SK-N-SH (cell line): ENCODE measurements at regions of chr17 and their contacts with region 1.

Region 1: GRCh38 chr17:48878918-48879898 is 13.4 kb upstream of the ATP5MC1 start:
- DNase-seq: peak; percentile 87
- H3K4me3 ChIP-seq: no peak overlapping the region
- H3K27ac ChIP-seq: no peak overlapping the region
- H3K4me1 ChIP-seq: no peaks in the 10 kb centered on the region
- H3K27me3 ChIP-seq: peaks cover 26% of the 10 kb centered on the region; the same call in 1 of the 2 replicates
- CTCF ChIP-seq: peak; percentile 100
- EP300 ChIP-seq: no peak
- RAD21 ChIP-seq: peak; percentile 100

Region 2: GRCh38 chr17:48148854-48149786 is 730.1 kb before region 1 on chr17:
- CTCF ChIA-PET with region 1: no interaction called
- POLR2A ChIA-PET with region 1: no interaction called
- DNase-seq: peak; percentile 50
- H3K4me3 ChIP-seq: no peak overlapping the region
- H3K27ac ChIP-seq: no peak overlapping the region
- H3K4me1 ChIP-seq: peaks cover 4 to 15% of the 10 kb centered on the region in 2 experiments; a peak in 3 of 4 replicates
- H3K27me3 ChIP-seq: peaks cover 96% of the 10 kb centered on the region
- CTCF ChIP-seq: no peak
- EP300 ChIP-seq: no peak
- RAD21 ChIP-seq: no peak

Region 3: GRCh38 chr17:48671697-48672171 is 207.5 kb before region 1 on chr17:
- CTCF ChIA-PET with region 1: interaction called, 117 read pairs
- POLR2A ChIA-PET with region 1: no interaction called
- DNase-seq: peak; percentile 76
- H3K4me3 ChIP-seq: peak overlapping the region; percentile 35 to 62; a peak in 3 of 4 replicates
- H3K27ac ChIP-seq: no peak overlapping the region
- H3K4me1 ChIP-seq: no peaks in the 10 kb centered on the region
- H3K27me3 ChIP-seq: peaks cover 79% of the 10 kb centered on the region
- CTCF ChIP-seq: peak; percentile 99
- EP300 ChIP-seq: no peak
- RAD21 ChIP-seq: peak; percentile 86

Region 4: GRCh38 chr17:48732688-48733629 is 146.2 kb before region 1 on chr17:
- CTCF ChIA-PET with region 1: interaction called, 328 read pairs
- POLR2A ChIA-PET with region 1: no interaction called
- DNase-seq: peak; percentile 44
- H3K4me3 ChIP-seq: no peak overlapping the region
- H3K27ac ChIP-seq: no peak overlapping the region
- H3K4me1 ChIP-seq: no peaks in the 10 kb centered on the region
- H3K27me3 ChIP-seq: peaks cover 99% of the 10 kb centered on the region
- CTCF ChIP-seq: no peak
- EP300 ChIP-seq: no peak
- RAD21 ChIP-seq: no peak

Region 5: DNA sequence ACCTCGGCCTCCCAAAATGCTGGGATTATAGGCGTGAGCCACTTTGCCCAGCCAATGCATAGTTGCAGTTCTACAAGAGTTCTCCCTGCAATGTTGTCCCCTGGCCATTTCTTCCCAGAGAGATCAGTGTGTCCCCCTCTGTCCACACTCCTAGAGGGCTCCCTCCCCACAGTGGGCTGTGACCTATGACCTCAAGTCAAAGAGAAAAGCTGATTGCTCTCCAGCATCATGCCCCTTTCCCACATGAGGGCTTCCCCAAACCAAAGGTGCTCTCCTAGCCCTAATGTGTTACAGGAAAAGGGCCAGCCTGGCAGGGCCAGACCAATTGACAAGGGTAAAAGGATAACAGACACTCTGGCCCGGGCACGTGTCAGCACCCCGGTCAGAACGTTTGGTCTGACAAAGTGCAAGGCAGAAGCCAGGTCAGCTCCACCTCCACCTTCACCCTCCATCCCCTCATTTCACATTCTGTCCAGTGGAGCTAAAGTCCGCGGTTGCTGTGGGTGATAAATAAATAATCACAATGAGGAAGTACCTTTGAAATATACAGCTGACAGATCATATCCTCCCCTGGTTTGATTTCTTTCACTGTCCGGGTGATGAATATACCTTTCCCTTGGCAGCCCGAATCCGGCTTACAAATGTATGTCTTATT is 80.0 kb before region 1 on chr17:
- CTCF ChIA-PET with region 1: interaction called, 1,196 read pairs
- POLR2A ChIA-PET with region 1: no interaction called
- DNase-seq: no peak
- H3K4me3 ChIP-seq: no peak overlapping the region
- H3K27ac ChIP-seq: no peak overlapping the region
- H3K4me1 ChIP-seq: peaks cover 0 to 18% of the 10 kb centered on the region in 2 experiments; a peak in 2 of 4 replicates
- H3K27me3 ChIP-seq: 0 out of 2 replicates have a peak, but pooled peaks cover 3% of the 10 kb centered on the region
- CTCF ChIP-seq: no peak
- EP300 ChIP-seq: no peak
- RAD21 ChIP-seq: no peak

Region 6: DNA sequence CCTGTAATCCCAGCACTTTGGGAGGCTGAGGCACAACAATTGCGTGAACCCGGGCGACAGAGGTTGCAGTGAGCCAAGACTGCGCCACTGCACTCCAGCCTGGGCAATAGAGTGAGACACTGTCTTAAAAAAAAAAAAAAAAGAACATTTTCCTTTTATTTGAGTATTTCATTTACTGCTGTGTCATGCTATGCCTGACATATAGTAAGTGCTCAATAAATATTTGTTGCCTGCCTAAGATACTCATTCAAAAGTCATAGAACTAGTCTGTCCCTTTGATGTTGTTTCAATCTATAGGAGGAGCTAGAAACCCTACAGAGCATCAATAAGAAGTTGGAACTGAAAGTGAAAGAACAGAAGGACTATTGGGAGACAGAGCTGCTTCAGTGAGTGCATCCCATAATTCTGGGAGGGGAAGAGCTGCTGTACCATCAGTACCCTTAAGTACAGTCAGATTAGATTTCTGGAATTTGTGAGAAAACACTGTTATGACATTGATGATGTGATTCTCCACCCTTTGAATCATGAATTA is 28.4 kb before region 1 on chr17:
- CTCF ChIA-PET with region 1: interaction called, 26 read pairs
- POLR2A ChIA-PET with region 1: no interaction called
- DNase-seq: no peak
- H3K4me3 ChIP-seq: no peak overlapping the region
- H3K27ac ChIP-seq: no peak overlapping the region
- H3K4me1 ChIP-seq: no peaks in the 10 kb centered on the region
- H3K27me3 ChIP-seq: no peaks in the 10 kb centered on the region
- CTCF ChIP-seq: no peak
- EP300 ChIP-seq: no peak
- RAD21 ChIP-seq: no peak

Region 7: DNA sequence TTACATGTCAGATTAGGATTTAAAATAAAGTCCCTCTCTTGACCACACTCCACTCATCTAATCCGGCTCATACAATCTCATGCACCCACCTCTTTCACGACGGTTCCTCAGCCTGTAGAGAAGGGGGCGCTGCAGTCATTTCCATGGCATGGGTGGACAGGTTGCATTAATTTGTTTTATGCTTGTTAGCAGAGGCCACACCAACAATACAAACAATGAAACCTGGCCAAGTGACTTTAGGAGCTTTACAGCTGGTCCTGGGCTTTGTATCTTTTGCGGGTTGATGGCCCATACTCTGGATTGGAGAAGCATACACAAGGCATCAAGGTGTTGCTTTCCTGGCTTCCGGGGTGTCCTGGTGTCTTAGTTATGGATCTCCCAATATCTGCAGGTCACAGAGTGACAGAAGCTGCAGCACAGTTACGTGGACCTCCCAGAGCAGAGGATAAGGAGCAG is 75.1 kb after region 1 on chr17:
- CTCF ChIA-PET with region 1: interaction called, 10 read pairs
- POLR2A ChIA-PET with region 1: no interaction called
- DNase-seq: no peak
- H3K4me3 ChIP-seq: no peak overlapping the region
- H3K27ac ChIP-seq: no peak overlapping the region
- H3K4me1 ChIP-seq: no peaks in the 10 kb centered on the region
- H3K27me3 ChIP-seq: no peaks in the 10 kb centered on the region
- CTCF ChIP-seq: peak; percentile 76
- EP300 ChIP-seq: no peak
- RAD21 ChIP-seq: peak; percentile 67